A673 (cell line): ENCODE measurements at regions of chr1 and their contacts with region 1.

Region 1: GRCh38 chr1:202501281-202501680 is 152.8 kb downstream of the PPP1R12B start:
- DNase-seq: peak; percentile 50
- H3K4me3 ChIP-seq: no peak overlapping the region
- H3K27ac ChIP-seq: no peak overlapping the region
- H3K4me1 ChIP-seq: no peaks in the 10 kb centered on the region
- H3K27me3 ChIP-seq: no peaks in the 10 kb centered on the region
- CTCF ChIP-seq: peak; percentile 59

Region 2: GRCh38 chr1:202599677-202600431 is 98.6 kb after region 1 on chr1:
- CTCF ChIA-PET with region 1: interaction called, 7 read pairs
- POLR2A ChIA-PET with region 1: no interaction called
- intact Hi-C with region 1: loop called (anchors 1 kb)
- DNase-seq: peak; percentile 84
- H3K4me3 ChIP-seq: no peak overlapping the region
- H3K27ac ChIP-seq: peak overlapping the region; percentile 6
- H3K4me1 ChIP-seq: no peaks in the 10 kb centered on the region
- H3K27me3 ChIP-seq: no peaks in the 10 kb centered on the region
- CTCF ChIP-seq: peak; percentile 96

Region 3: DNA sequence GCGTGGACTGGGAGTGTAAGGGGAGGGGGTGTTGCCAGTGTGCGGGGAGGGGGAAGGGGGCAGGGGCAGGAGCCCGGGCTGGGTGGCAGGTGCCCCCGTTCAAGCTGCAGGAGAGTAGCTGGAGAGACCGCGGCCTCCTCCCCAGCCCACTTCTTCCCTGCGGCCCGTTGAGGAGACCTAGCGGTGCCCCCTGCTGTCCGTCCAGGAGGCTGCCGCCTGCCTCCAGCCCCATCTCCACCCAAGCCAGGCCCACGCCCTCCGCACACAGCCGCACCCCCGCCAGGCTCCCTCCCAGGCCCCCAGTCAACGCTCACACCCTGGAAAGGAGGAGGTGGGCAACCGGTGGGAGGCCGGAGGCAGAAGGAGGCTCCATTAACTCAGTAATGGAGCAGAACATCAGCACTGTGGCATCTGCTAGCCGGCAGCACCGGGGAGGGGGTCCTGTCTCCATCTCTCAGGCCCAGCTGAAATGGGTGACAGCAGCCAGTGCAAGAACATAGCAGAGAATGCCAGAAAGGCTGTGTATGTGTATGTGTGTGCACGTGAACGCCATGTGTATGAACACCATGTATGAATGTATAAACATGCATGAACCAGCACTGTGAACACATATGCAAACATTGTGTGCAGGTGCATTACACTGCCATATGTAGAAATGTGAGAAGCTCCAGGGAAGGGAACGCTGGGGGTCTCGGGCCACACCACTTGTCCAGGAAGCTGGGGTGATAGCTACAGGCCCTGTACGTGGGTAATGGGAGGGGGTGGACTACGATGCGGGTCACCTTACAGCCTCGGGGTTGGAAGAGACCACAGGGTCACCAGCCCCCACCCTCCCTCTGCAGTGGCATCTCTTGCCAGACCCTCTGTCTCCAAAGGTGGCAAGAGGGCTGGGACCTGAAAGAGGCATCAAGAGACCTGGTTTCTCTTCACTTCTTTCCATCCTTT is 124.4 kb after region 1 on chr1:
- CTCF ChIA-PET with region 1: interaction called, 3 read pairs
- POLR2A ChIA-PET with region 1: no interaction called
- intact Hi-C with region 1: loop called (anchors 1 kb)
- DNase-seq: peak; percentile 85
- H3K4me3 ChIP-seq: no peak overlapping the region
- H3K27ac ChIP-seq: peak overlapping the region; percentile 37
- H3K4me1 ChIP-seq: peaks cover 47% of the 10 kb centered on the region
- H3K27me3 ChIP-seq: no peaks in the 10 kb centered on the region
- CTCF ChIP-seq: peak; percentile 72

Region 4: DNA sequence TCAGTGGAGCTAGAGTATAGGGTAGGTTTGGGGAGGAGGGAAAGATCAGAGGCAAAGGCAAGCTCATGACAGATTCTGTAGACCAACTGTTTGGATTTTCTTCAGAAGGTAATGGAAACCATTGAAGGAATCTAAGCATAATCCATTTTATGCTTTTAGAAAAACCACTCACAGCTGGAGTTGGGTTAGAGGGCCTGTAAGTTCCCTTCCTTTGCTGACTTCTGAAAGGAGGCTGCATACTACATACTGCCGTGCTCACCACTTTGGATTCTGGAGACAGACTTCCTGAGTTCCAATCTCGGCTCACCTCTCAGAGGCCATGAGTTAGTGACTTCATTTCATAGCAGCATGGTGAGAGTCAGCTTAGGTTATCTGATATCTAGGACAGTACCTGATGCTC is 215.4 kb after region 1 on chr1:
- CTCF ChIA-PET with region 1: interaction called, 4 read pairs
- POLR2A ChIA-PET with region 1: no interaction called
- intact Hi-C with region 1: loop called (anchors 5 kb)
- DNase-seq: no peak
- H3K4me3 ChIP-seq: no peak overlapping the region
- H3K27ac ChIP-seq: no peak overlapping the region
- H3K4me1 ChIP-seq: no peaks in the 10 kb centered on the region
- H3K27me3 ChIP-seq: no peaks in the 10 kb centered on the region
- CTCF ChIP-seq: no peak